Right ventricle myocardium inferior (tissue), 1 donor: ENCODE measurements at regions of chr13 and their contacts with region 1.

Region 1: DNA sequence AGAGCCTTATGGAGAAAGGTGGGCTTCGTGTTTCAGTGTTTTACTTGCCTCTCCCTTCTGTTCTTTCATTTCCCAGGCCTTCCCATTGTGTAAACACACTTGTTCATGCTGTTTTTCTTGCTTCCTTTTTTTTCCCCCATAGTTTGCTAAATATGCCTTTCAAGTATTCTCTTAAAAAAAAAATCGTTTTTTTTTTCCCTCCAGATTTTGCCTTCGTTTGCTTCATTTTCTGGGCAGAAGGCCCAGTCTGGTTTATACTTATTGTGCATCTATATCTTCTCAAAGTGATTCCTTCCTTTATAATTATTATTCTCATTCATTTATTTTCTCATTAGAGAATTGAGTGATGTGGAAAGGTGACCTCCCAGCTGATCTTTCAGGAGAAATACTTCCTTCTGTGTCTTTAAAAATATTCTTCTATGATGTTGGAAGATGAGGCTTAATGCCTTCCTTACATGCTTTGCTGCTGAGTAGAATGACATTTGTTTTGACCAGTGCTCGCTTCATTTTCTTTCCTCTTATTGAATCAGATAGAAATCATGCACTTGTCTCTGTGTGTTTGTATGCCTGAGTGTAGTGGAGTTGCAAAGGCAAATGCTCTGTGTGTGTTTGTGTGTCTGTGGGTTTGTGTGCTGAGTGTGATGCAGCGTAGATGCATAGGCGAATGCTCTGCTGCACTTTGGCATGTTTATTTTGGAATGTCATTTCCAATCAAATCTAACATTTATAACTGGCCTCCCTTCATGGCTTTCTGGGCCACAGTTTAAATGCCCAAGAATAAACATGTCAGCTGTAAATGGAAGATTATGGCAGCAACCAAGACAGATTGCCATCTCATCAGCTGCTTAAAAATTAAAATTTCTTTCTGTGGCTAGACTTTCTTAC is 591.4 kb downstream of the FGF9 start:
- DNase-seq: no peak
- ATAC-seq: no peak

Region 2: DNA sequence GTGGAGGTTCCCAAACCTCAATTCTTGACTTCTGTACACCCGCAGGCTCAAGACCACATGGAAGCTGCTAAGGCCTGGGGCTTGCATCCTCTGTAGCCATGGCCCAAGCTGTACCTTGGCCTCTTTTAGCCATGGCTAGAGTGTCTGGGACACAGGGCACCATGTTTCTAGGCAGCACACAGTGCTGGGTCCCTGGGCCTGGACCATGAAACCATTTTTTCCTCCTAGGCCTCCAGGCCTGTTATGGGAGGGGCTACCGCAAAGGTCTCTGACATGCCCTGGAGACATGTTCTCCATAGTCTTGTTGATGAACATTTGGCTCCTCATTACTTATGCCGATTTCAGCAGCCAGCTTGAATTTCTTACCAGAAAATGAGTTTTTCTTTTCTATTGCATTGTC is 110.0 kb after region 1 on chr13:
- intact Hi-C with region 1: no loop called
- DNase-seq: no peak
- ATAC-seq: no peak

Region 3: GRCh38 chr13:22447132-22447886 is 185.1 kb after region 1 on chr13:
- intact Hi-C with region 1: loop called (anchors 10 kb)
- DNase-seq: no peak
- ATAC-seq: no peak